A673 (cell line): ENCODE measurements at regions of chr10 and their contacts with region 1.

Region 1: GRCh38 chr10:117964536-117964935 is 82.2 kb downstream of the RAB11FIP2 start:
- DNase-seq: no peak
- H3K4me3 ChIP-seq: no peak overlapping the region
- H3K27ac ChIP-seq: no peak overlapping the region
- H3K4me1 ChIP-seq: no peaks in the 10 kb centered on the region
- H3K27me3 ChIP-seq: peaks cover 63% of the 10 kb centered on the region
- CTCF ChIP-seq: no peak

Region 2: GRCh38 chr10:116836902-116837523 is 1127.5 kb before region 1 on chr10:
- CTCF ChIA-PET with region 1: no interaction called
- POLR2A ChIA-PET with region 1: interaction called, 18 read pairs
- intact Hi-C with region 1: no loop called
- DNase-seq: peak; percentile 56
- H3K4me3 ChIP-seq: no peak overlapping the region
- H3K27ac ChIP-seq: no peak overlapping the region
- H3K4me1 ChIP-seq: peaks cover 42% of the 10 kb centered on the region
- H3K27me3 ChIP-seq: no peaks in the 10 kb centered on the region
- CTCF ChIP-seq: peak; percentile 63

Region 3: DNA sequence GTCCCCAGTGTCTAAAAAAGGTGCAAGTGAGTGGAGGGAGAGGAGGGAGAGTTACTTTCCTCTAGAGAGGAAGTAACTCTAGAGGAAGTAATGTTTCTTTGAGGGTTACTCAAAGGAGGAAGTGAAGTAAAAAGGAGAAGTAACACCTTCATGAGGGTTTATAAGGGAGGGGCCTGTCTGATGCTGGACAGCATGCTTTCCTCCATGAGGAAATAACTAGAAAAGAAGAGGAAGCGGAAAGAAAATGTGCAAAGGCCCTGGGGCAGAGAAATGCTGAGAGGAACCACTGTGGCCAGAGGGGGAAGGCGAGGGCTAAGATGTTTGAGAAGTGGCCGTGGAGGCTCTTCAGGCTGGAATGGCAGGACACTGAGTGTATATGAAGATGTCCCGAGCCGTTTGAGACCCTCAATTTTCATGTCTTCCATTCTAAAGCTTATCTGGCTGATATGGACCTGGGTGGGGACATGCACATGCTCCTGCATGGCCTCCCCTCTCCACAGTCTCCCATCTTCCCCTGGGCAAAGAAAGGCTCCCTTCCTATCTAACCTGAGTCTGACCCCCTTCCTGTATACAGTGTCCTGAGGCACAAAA is 727.0 kb before region 1 on chr10:
- CTCF ChIA-PET with region 1: no interaction called
- POLR2A ChIA-PET with region 1: no interaction called
- intact Hi-C with region 1: no loop called
- DNase-seq: no peak
- H3K4me3 ChIP-seq: no peak overlapping the region
- H3K27ac ChIP-seq: no peak overlapping the region
- H3K4me1 ChIP-seq: no peaks in the 10 kb centered on the region
- H3K27me3 ChIP-seq: peaks cover 95% of the 10 kb centered on the region
- CTCF ChIP-seq: no peak

Region 4: GRCh38 chr10:117762819-117763172 is 201.7 kb before region 1 on chr10:
- CTCF ChIA-PET with region 1: no interaction called
- POLR2A ChIA-PET with region 1: no interaction called
- intact Hi-C with region 1: no loop called
- DNase-seq: peak; percentile 36
- H3K4me3 ChIP-seq: no peak overlapping the region
- H3K27ac ChIP-seq: no peak overlapping the region
- H3K4me1 ChIP-seq: no peaks in the 10 kb centered on the region
- H3K27me3 ChIP-seq: peaks cover 53% of the 10 kb centered on the region
- CTCF ChIP-seq: no peak